Endothelial cell of umbilical vein (primary cell): ENCODE measurements at regions of chr3 and their contacts with region 1.

Region 1: DNA sequence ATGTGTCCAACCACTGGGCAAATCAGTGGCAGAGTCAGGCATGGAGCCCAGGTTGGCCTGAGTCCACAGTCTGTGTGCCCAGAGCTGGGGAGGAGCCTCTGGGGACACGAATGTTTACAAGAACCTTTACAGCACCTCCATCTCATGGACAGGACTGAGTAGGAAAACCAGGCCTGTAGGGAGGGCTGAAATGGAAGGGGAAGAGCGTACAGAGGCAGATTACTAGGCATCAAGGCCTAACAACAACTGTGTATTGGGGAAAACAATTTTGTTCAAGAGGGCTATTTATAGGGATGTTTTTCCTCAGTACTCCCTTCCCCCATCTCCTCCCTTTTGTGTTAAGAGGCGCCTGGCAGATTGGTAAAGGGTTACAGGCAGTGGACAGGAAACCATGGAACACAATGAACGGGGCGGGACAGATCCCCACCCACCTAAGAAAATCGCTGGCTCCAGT is 15.1 kb upstream of the ARHGAP31 start:
- DNase-seq: peak; percentile 93
- H3K4me3 ChIP-seq: no peak overlapping the region
- H3K27ac ChIP-seq: peak overlapping the region; percentile 66
- H3K4me1 ChIP-seq: peaks cover 17% of the 10 kb centered on the region
- H3K27me3 ChIP-seq: no peaks in the 10 kb centered on the region
- CTCF ChIP-seq: no peak
- POLR2A ChIP-seq: peak; percentile 47

Region 2: GRCh38 chr3:119322835-119323722 is 44.0 kb after region 1 on chr3:
- CTCF ChIA-PET with region 1: interaction called, 6 read pairs
- POLR2A ChIA-PET with region 1: no interaction called
- dilution Hi-C with region 1: no loop called
- intact Hi-C with region 1: loop called (anchors 1 kb)
- DNase-seq: peak; percentile 90
- H3K4me3 ChIP-seq: peak overlapping the region; percentile 27 to 69 (median 44)
- H3K27ac ChIP-seq: peak overlapping the region; percentile 61
- H3K4me1 ChIP-seq: peaks cover 22% of the 10 kb centered on the region
- H3K27me3 ChIP-seq: no peaks in the 10 kb centered on the region
- CTCF ChIP-seq: peak in 1 of 2 donors; percentile 11
- POLR2A ChIP-seq: peak; percentile 57

Region 3: GRCh38 chr3:119380697-119381096 is 101.6 kb after region 1 on chr3:
- CTCF ChIA-PET with region 1: interaction called, 5 read pairs
- POLR2A ChIA-PET with region 1: no interaction called
- dilution Hi-C with region 1: no loop called
- intact Hi-C with region 1: loop called (anchors 2 kb)
- DNase-seq: no peak
- H3K4me3 ChIP-seq: no peak overlapping the region
- H3K27ac ChIP-seq: no peak overlapping the region
- H3K4me1 ChIP-seq: no peaks in the 10 kb centered on the region
- H3K27me3 ChIP-seq: no peaks in the 10 kb centered on the region
- CTCF ChIP-seq: peak in 1 of 2 donors; percentile 6
- POLR2A ChIP-seq: no peak

Region 4: DNA sequence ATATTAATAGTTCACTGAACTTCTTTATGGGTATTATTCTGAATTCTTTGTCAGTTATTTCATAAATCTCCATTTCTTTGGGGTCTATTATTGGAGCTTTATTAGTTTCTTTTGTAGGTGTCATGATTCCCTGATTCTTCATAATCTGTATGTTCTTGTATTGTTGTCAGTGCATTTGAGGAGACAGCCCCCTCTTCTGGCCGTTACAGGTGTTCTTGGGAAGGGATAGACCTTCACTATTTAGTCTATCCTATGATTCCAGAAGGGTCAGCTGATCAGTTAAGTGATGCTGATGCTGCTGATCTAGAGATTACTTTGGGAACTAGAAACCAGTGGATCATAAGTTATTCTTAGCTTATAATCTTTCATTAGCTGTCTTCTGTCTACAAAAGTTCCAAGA is 149.4 kb after region 1 on chr3:
- CTCF ChIA-PET with region 1: interaction called, 3 read pairs
- POLR2A ChIA-PET with region 1: no interaction called
- dilution Hi-C with region 1: no loop called
- intact Hi-C with region 1: loop called (anchors 2 kb)
- DNase-seq: no peak
- H3K4me3 ChIP-seq: no peak overlapping the region
- H3K27ac ChIP-seq: no peak overlapping the region
- H3K4me1 ChIP-seq: peaks cover 14% of the 10 kb centered on the region
- H3K27me3 ChIP-seq: no peaks in the 10 kb centered on the region
- CTCF ChIP-seq: no peak
- POLR2A ChIP-seq: no peak

Region 5: DNA sequence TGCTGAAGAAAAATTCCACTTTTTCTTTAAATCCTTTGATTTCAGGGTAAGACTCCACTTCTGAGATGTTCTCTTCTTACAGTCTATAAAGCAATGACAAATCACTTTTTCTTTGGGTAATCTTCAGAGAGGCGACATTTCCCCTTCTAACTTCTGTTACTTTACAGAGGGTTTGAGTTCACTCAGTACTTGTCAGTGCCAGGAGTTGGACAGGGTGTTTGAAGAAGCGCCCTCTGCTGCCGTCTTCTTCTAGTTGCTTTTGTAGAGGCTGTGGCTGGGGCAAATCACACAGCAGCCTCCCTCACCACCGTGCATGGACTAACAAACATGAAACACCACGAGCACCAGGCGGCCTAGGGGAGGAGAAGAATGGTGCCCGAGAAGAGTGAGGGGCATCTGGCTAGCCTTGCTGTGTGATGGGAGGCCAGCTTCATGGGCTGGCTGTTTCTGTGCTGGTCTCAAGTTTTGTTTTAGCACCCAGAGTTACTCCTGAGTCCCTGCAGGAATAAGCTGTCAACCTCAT is 280.4 kb after region 1 on chr3 and contains the start of gene CD80:
- CTCF ChIA-PET with region 1: no interaction called
- POLR2A ChIA-PET with region 1: no interaction called
- dilution Hi-C with region 1: no loop called
- intact Hi-C with region 1: loop called (anchors 10 kb)
- DNase-seq: peak; percentile 41
- H3K4me3 ChIP-seq: no peak within 1 kb of the TSS
- H3K27ac ChIP-seq: no peak within 1 kb of the TSS
- H3K4me1 ChIP-seq: no peaks in the 10 kb centered on the region
- H3K27me3 ChIP-seq: peaks cover 0 to 13% of the 10 kb centered on the region in 2 experiments
- CTCF ChIP-seq: peak; percentile 16 to 40
- POLR2A ChIP-seq: no peak
- total RNA-seq, gene CD80: not detected in 2 replicates